RWPE1 (cell line): ENCODE measurements at regions of chr16 and their contacts with region 1.

Region 1: GRCh38 chr16:19886073-19886941 is 1.7 kb upstream of the GPRC5B start:
- DNase-seq: peak; percentile 59
- H3K27ac ChIP-seq: no peak overlapping the region
- CTCF ChIP-seq: peak; percentile 99

Region 2: DNA sequence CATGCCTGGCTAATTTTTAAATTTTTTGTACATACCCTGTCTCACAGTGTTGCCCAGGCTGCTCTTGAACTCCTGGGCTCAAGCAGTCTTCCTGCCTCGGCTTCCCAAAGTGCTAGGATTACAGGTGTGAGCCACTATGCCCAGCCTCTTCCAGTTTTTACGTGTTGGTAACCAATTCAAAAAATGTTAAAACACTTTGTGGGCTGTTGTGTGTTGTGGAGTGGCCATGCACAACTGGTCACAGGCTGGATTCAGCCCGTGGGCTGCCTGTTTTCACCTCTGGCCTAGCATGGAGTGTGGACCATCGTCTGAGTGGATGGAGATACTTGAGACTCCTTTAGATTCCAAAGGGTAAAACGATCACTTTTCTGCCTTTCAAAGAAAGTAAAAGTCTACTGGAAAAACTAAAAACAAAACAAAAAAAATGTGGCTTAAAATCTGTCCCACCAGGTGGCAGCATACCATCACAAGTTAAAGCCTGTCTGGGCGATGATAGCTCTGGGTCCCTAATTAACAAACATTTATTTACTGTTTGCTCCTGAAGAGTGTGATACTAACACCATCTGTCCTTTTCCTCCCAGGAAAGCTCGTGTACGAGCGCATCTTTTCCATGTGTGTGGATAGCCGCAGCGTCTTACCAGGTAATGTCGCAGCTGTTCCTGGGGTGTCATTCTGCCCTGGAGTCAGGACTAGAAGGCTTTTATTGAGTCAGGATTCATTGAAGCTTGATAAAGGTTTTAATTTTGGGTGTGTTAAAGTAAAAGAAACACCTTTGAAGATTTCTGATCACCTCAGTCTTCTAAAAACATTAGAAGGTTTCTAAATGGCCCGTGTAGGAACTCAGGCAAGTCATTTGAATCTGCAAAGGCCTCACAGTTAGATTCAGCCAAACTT is 285.0 kb before region 1 on chr16:
- CTCF ChIA-PET with region 1: interaction called, 33 read pairs
- POLR2A ChIA-PET with region 1: no interaction called
- DNase-seq: peak; percentile 31
- H3K27ac ChIP-seq: peak overlapping the region; percentile 34; the same call in 1 of the 2 replicates
- CTCF ChIP-seq: peak; percentile 56; the same call in 1 of the 2 replicates

Region 3: DNA sequence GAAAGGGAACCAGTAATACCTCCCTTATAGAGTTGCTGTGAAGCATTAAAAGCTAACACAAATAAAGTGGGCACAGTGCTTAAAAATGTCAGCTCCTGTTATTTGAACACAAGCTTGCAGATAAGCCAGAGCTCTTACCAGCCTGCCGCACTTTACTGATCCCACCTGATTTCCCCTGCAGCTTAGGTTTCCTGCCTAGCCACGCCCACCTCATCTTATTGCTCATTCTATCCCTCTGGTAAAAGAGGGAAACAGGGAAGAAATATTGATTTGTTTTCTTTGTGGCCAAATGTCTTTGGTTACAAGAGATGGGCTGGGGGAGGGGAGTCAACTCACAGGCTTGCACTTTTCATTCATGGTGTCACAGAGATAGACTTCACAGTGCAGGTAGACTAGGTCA is 450.6 kb after region 1 on chr16:
- CTCF ChIA-PET with region 1: no interaction called
- POLR2A ChIA-PET with region 1: no interaction called
- DNase-seq: no peak
- H3K27ac ChIP-seq: no peak overlapping the region
- CTCF ChIP-seq: no peak